T-cell (primary cell): ENCODE measurements at regions of chr7 and their contacts with region 1.

Region 1: GRCh38 chr7:23462846-23463245 is 7.4 kb downstream of the IGF2BP3 start:
- DNase-seq: peak in 2 of 35 experiments; percentile 4 to 35
- ATAC-seq: peak in 1 of 4 experiments; percentile 29
- H3K4me3 ChIP-seq: no peak overlapping the region
- H3K4me3 Mint-ChIP-seq: no peak overlapping the region
- H3K27ac ChIP-seq: no peak overlapping the region
- H3K27ac Mint-ChIP-seq: no peak overlapping the region
- H3K4me1 ChIP-seq: peaks cover 3 to 45% of the 10 kb centered on the region in 2 experiments
- H3K4me1 Mint-ChIP-seq: peaks cover 7 to 10% (median 7%) of the 10 kb centered on the region in 3 donors
- H3K27me3 ChIP-seq: peaks cover 0 to 37% of the 10 kb centered on the region in 2 experiments
- H3K27me3 Mint-ChIP-seq: peaks cover 66 to 70% of the 10 kb centered on the region in 2 donors

Region 2: DNA sequence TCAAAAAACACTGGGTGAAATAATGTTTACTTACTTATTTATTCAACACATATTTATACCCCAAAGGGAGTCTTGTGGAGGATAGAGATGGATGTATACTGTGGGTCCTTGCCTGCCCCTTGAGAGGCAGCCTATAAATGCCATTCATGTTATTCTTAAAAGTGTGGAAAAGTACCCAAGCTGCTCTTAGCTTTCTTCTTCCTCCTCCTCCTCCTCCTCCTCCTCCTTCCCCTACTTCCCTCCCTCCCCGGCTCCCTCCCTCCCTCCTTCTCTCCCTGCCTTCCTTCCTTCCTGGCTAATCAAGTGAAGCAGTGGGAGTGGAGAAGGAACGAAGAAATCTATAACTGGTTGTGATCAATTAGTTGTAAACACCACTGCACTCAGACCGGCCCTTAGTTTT is 28.7 kb after region 1 on chr7:
- CTCF ChIA-PET with region 1: interaction called in 1 of 2 experiments, 3 read pairs
- POLR2A ChIA-PET with region 1: interaction called in 1 of 2 experiments, 11 read pairs
- DNase-seq: no peak
- ATAC-seq: no peak
- H3K4me3 ChIP-seq: no peak overlapping the region
- H3K4me3 Mint-ChIP-seq: peak overlapping the region; percentile 79 to 81 (median 80)
- H3K27ac ChIP-seq: no peak overlapping the region
- H3K27ac Mint-ChIP-seq: no peak overlapping the region
- H3K4me1 ChIP-seq: peaks cover 2 to 13% of the 10 kb centered on the region in 2 experiments
- H3K4me1 Mint-ChIP-seq: peaks cover 4 to 9% (median 6%) of the 10 kb centered on the region in 3 donors
- H3K27me3 ChIP-seq: no peaks in the 10 kb centered on the region
- H3K27me3 Mint-ChIP-seq: no peaks in the 10 kb centered on the region